Heart right ventricle (tissue), 16 donors: ENCODE measurements at regions of chr11 and their contacts with region 1.

Region 1: DNA sequence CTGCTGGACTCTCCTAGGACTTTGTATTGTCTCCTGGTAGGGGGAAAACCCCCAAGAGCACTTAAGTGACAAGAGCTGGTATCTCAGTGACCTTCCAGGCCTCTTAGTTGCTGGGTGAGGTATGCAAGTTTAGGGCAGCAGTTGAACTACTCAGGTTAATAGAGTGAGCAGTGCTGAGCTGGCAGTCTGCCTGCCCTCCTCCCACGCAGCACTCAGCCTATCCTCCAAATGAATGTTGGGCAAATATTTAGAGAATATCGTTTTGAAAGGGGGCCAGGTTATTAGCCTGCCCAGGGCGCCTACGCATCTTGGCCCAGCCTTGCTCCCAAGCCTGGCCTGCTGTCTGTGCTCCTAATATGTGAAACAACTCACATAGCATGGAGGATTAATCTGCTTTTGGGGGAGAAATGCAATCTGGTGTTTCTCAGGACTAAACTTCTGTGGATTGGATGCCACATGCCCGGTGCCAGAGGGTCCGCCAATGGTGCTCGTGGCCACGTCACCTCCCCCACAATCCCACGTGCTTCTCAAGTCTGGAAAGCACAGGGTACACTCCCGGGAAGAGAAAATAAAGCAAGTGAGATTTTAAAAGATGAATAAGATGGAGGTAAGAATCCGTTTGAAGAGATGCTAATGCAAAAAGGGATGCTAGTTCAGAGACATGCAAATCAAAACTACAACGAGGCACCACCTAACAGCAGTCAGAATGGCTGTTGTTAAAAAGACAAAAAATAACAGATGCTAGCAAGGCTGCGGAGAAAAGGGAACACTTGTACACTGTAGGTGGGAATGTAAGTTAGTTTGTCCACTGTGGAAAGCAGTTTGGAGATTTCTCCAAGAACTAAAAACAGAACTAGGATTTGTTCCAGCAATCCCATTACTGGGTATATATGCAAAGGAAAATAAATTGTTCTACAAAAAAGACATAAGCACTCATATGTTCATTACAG is 67.7 kb downstream of the SPON1 start:
- DNase-seq: peak; percentile 65 to 66
- ATAC-seq: peak; percentile 59 to 94 (median 83)
- H3K4me3 ChIP-seq: no peak overlapping the region
- H3K27ac ChIP-seq: peak overlapping the region in 1 of 10 donors; percentile 46
- H3K4me1 ChIP-seq: peaks cover 3 to 46% (median 15%) of the 10 kb centered on the region in 9 donors
- H3K27me3 ChIP-seq: peaks cover 0 to 54% (median 11%) of the 10 kb centered on the region in 7 donors
- CTCF ChIP-seq: no peak

Region 2: DNA sequence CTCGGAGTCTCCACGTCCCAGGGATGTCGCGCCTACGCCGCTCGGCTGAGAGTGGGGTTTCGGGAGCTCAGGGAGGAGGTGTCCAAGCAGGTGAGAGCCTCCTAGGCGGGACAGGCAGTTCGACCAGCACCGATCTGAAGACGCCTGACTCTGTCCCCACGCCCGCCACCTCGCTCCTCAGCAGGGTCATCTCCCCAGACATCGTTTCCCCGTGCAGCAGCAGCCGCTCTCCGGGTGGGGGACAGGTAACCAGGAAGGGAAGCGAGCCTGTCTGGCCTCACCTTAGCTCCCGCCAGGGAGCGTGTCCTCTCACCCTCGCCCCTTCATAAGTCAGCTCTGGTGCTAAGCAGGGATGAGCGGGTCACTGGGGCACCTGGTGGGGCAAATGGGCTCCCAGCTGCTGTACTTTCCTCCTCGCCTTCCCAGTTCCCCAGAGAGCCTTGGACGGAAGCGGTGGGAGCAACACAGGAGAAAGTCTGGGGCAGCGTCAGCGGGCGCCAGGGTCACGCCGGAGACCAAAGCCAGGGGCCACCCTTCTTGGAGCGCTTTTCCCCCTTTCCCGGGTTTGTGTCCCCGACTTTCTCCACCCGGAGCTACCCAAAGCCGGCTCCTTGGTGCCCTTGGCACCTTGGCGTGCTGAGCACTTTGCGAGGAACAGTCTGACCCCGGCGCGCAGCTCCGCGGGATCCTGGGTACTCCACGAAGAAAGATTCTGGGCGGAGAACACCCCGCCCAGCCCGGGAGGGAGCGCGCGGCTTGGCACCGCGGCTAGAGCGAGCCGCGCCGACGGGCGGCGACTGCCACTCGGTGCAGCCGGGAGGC is 66.1 kb before region 1 on chr11:
- intact Hi-C with region 1: loop called in 1 of 10 experiments (anchors 5 kb)
- DNase-seq: peak; percentile 8 to 41
- ATAC-seq: peak; percentile 25 to 70 (median 64)
- H3K4me3 ChIP-seq: peak overlapping the region; percentile 4 to 56 (median 48)
- H3K27ac ChIP-seq: peak overlapping the region in 5 of 10 donors; percentile 31 to 75 (median 52)
- H3K4me1 ChIP-seq: peaks cover 0 to 32% (median 15%) of the 10 kb centered on the region in 9 donors
- H3K27me3 ChIP-seq: peaks cover 20 to 99% (median 80%) of the 10 kb centered on the region in 7 donors
- CTCF ChIP-seq: peak in 1 of 9 donors; percentile 21

Region 3: GRCh38 chr11:13970986-13971385 is 59.3 kb before region 1 on chr11:
- intact Hi-C with region 1: loop called in 2 of 10 experiments (anchors 5 kb)
- DNase-seq: no peak
- ATAC-seq: peak; percentile 28 to 54 (median 46)
- H3K4me3 ChIP-seq: no peak overlapping the region
- H3K27ac ChIP-seq: no peak overlapping the region
- H3K4me1 ChIP-seq: peaks cover 0 to 22% (median 12%) of the 10 kb centered on the region in 9 donors
- H3K27me3 ChIP-seq: peaks cover 0 to 49% (median 36%) of the 10 kb centered on the region in 7 donors
- CTCF ChIP-seq: peak in 7 of 9 donors; percentile 18 to 50 (median 36)